CD4-positive, alpha-beta memory T cell (primary cell): ENCODE measurements at regions of chr4 and their contacts with region 1.

Region 1: DNA sequence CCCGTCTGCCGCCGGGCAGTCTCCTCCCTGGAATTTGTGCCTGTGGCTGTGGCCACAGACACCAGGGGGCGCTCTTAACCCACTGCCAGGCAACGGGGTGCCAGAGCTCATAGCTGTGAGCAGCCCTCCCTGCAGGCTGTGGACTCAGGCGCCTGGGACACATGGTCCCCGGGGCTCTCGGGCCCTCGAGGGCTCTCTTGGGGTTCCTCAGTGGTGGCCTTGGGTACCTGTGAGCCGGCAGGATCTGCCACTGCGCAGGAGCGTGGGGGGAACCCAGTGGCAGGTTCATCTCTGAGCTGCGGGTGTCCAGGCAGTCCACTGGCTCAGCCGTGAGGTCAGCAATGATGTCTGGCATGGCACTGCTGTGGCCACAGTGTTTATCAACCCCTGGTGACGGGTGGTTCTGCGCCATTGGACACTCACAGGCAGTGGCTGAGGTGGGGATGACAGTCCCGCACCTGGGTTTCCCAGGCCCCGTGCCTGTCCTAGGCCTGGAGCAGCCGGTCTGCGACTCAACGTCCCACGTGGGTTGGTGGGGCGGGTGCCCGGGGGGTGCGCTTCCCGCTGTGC is 37.2 kb downstream of the PCGF3 start:
- DNase-seq: peak; percentile 66 to 74 (median 67)
- H3K4me3 ChIP-seq: no peak overlapping the region
- H3K4me3 Mint-ChIP-seq: no peak overlapping the region
- H3K27ac ChIP-seq: no peak overlapping the region
- H3K27ac Mint-ChIP-seq: peak overlapping the region in 2 of 7 donors; percentile 30 to 48
- H3K4me1 ChIP-seq: no peaks in the 10 kb centered on the region
- H3K4me1 Mint-ChIP-seq: peaks cover 0 to 4% (median under 1%) of the 10 kb centered on the region in 4 donors
- H3K27me3 ChIP-seq: no peaks in the 10 kb centered on the region
- H3K27me3 Mint-ChIP-seq: no peaks in the 10 kb centered on the region

Region 2: DNA sequence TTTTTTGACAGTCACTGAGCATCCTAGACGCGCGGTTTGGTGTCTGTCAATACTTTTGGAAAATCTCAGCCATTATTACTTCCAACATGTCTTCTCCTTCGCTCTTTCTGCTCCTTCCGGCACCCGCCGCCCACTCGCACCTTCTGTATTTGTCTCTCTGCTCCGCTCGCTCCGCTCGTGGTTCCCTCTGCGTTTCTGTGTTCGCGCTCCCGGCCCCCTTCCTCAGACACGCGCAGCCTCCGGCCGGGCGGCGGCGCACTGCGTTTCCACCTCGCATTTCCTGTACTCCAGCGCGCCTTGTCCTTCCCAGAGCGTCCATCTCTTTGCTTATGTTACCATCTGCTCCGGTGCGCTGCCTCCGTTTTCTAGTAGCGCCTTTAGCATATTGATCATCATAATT is 96.4 kb before region 1 on chr4:
- CTCF ChIA-PET with region 1: no interaction called
- POLR2A ChIA-PET with region 1: no interaction called
- intact Hi-C with region 1: no loop called
- DNase-seq: peak in 1 of 5 donors; percentile 12
- H3K4me3 ChIP-seq: no peak overlapping the region
- H3K4me3 Mint-ChIP-seq: peak overlapping the region; percentile 27 to 84 (median 80)
- H3K27ac ChIP-seq: no peak overlapping the region
- H3K27ac Mint-ChIP-seq: peak overlapping the region in 4 of 7 donors; percentile 38 to 68 (median 53)
- H3K4me1 ChIP-seq: no peaks in the 10 kb centered on the region
- H3K4me1 Mint-ChIP-seq: peaks cover 0 to 6% (median 3%) of the 10 kb centered on the region in 4 donors
- H3K27me3 ChIP-seq: no peaks in the 10 kb centered on the region
- H3K27me3 Mint-ChIP-seq: peaks cover 8 to 17% of the 10 kb centered on the region in 2 donors

Region 3: GRCh38 chr4:876780-877179 is 134.0 kb after region 1 on chr4:
- CTCF ChIA-PET with region 1: interaction called, 15 read pairs
- POLR2A ChIA-PET with region 1: no interaction called
- intact Hi-C with region 1: no loop called
- DNase-seq: no peak
- H3K4me3 ChIP-seq: no peak overlapping the region
- H3K4me3 Mint-ChIP-seq: peak overlapping the region in 1 of 8 donors; percentile 21
- H3K27ac ChIP-seq: no peak overlapping the region
- H3K27ac Mint-ChIP-seq: peak overlapping the region in 3 of 7 donors; percentile 21 to 81 (median 59)
- H3K4me1 ChIP-seq: peaks cover 26% of the 10 kb centered on the region
- H3K4me1 Mint-ChIP-seq: peaks cover 24 to 36% (median 28%) of the 10 kb centered on the region in 4 donors
- H3K27me3 ChIP-seq: no peaks in the 10 kb centered on the region
- H3K27me3 Mint-ChIP-seq: no peaks in the 10 kb centered on the region

Region 4: GRCh38 chr4:986879-987623 is 244.2 kb after region 1 on chr4 and contains the start of gene IDUA:
- CTCF ChIA-PET with region 1: interaction called, 29 read pairs
- POLR2A ChIA-PET with region 1: interaction called, 5 read pairs
- intact Hi-C with region 1: loop called (anchors 2 kb)
- DNase-seq: peak; percentile 79 to 84 (median 82)
- H3K4me3 ChIP-seq: peak within 1 kb of the TSS; percentile 76 to 83
- H3K4me3 Mint-ChIP-seq: peak within 1 kb of the TSS; percentile 88 to 95 (median 90)
- H3K27ac ChIP-seq: peak within 1 kb of the TSS; percentile 60
- H3K27ac Mint-ChIP-seq: peak within 1 kb of the TSS; percentile 40 to 92 (median 83)
- H3K4me1 ChIP-seq: peaks cover 34% of the 10 kb centered on the region
- H3K4me1 Mint-ChIP-seq: peaks cover 8 to 35% (median 15%) of the 10 kb centered on the region in 4 donors
- H3K27me3 ChIP-seq: no peaks in the 10 kb centered on the region
- H3K27me3 Mint-ChIP-seq: no peaks in the 10 kb centered on the region
- total RNA-seq, gene IDUA: 63.0 to 64.1 TPM

Region 5: GRCh38 chr4:1055721-1056590 is 313.1 kb after region 1 on chr4:
- CTCF ChIA-PET with region 1: no interaction called
- POLR2A ChIA-PET with region 1: no interaction called
- intact Hi-C with region 1: loop called (anchors 2 kb)
- DNase-seq: peak; percentile 87 to 93 (median 90)
- H3K4me3 ChIP-seq: peak overlapping the region; percentile 53 to 73
- H3K4me3 Mint-ChIP-seq: peak overlapping the region; percentile 61 to 85 (median 80)
- H3K27ac ChIP-seq: peak overlapping the region; percentile 28
- H3K27ac Mint-ChIP-seq: peak overlapping the region; percentile 66 to 97 (median 92)
- H3K4me1 ChIP-seq: peaks cover 13% of the 10 kb centered on the region
- H3K4me1 Mint-ChIP-seq: peaks cover 5 to 15% (median 8%) of the 10 kb centered on the region in 4 donors
- H3K27me3 ChIP-seq: peaks cover 1% of the 10 kb centered on the region
- H3K27me3 Mint-ChIP-seq: peaks cover 0 to 15% of the 10 kb centered on the region in 2 donors

Region 6: GRCh38 chr4:1072830-1073446 is 330.1 kb after region 1 on chr4:
- CTCF ChIA-PET with region 1: no interaction called
- POLR2A ChIA-PET with region 1: no interaction called
- intact Hi-C with region 1: loop called (anchors 5 kb)
- DNase-seq: peak; percentile 37 to 56 (median 48)
- H3K4me3 ChIP-seq: no peak overlapping the region
- H3K4me3 Mint-ChIP-seq: peak overlapping the region in 1 of 8 donors; percentile 71
- H3K27ac ChIP-seq: no peak overlapping the region
- H3K27ac Mint-ChIP-seq: peak overlapping the region in 4 of 7 donors; percentile 28 to 77 (median 56)
- H3K4me1 ChIP-seq: no peaks in the 10 kb centered on the region
- H3K4me1 Mint-ChIP-seq: peaks cover 5 to 10% (median 7%) of the 10 kb centered on the region in 4 donors
- H3K27me3 ChIP-seq: no peaks in the 10 kb centered on the region
- H3K27me3 Mint-ChIP-seq: peaks cover 5 to 14% of the 10 kb centered on the region in 2 donors